ENCODE measurements at regions of chr7 and their contacts with region 1.

Region 1: DNA sequence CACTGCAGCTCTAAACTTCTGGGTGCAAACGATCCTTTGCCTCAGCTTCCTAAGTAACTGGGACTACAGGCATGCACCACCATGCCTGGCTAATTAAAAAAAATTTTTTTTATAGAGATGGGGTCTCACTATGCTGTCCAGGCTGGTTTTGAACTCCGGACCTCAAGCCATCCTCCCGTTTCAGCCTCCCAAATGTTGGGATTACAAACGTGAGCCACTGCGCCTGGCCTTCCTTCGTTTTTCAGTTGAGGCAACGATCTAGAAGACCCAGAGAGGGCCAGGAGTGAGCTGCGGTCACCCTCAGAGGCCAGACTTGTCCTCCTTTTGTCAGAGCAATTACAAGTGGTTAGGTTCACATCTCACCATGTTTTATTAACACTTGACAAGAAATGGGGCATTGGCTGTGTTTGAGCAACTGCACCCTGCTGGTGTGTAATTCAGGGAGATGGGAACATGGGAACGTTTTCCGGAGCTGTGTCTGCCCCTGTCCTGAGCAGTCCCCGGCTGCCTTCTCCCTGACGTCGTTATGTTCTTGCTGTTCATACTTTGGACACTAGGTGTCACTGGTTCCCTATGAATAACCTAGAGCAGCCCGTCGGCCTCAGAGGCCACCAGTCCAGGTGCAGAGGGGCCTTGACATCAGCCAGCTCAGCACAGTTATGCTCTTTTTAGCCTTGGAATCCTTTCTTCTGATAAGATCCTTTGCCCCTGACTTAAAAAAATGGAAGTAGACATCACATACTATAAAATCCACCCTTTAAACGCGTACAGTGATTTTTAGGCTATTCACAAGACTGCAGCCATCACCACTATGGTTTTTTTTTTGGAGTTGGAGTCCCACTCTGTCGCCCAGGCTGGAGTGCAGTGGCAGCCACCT is 375.0 kb downstream of the TYW1 start:
- DNase-seq: peak; percentile 67
- H3K4me3 ChIP-seq: no peak overlapping the region
- H3K27ac ChIP-seq: no peak overlapping the region
- H3K4me1 ChIP-seq: no peaks in the 10 kb centered on the region
- H3K27me3 ChIP-seq: no peaks in the 10 kb centered on the region
- CTCF ChIP-seq: peak; percentile 30 to 69 (median 68)
- POLR2A ChIP-seq: no peak

Region 2: DNA sequence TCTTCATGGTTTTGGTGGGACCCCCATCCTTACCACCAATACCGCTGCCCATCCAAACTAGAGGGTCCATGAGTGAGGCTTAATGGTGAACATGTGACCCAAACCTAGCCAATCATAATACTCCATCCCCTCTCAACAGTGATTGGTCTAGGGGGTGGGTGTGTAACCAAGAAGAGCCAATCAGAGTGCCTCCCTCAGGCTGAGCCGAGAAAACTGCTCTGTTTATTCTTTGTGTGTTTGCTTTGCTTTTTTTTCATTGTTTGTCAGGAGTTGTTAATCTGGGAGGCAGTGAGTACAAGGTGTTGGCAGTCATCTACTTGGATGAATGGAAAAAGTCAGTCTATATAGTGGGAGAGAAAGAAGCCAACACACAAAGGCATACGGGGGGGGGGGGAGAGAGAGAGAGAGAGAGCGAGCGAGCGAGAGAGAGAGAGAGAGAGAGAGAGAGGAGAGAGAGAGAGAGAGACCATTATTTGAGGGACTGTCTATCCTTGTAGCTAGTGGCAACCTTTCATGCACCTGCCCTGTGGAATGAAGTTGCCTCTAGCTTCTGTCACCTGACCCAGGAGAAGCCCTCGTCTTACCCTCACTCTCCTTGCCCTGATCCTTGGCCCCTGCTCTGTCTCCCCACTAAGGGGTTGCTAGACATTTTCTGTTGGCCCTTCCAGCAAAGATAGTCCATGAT is 66.7 kb after region 1 on chr7:
- intact Hi-C with region 1: no loop called
- DNase-seq: no peak
- H3K4me3 ChIP-seq: no peak overlapping the region
- H3K27ac ChIP-seq: no peak overlapping the region
- H3K4me1 ChIP-seq: peaks cover 7% of the 10 kb centered on the region
- H3K27me3 ChIP-seq: no peaks in the 10 kb centered on the region
- CTCF ChIP-seq: peak in 1 of 4 experiments; percentile 10
- POLR2A ChIP-seq: no peak

Region 3: GRCh38 chr7:67625257-67625737 is 253.6 kb after region 1 on chr7:
- intact Hi-C with region 1: loop called (anchors 10 kb)
- DNase-seq: peak; percentile 61
- H3K4me3 ChIP-seq: peak overlapping the region in 1 of 2 donors; percentile 12
- H3K27ac ChIP-seq: no peak overlapping the region
- H3K4me1 ChIP-seq: no peaks in the 10 kb centered on the region
- H3K27me3 ChIP-seq: no peaks in the 10 kb centered on the region
- CTCF ChIP-seq: peak; percentile 57 to 85 (median 75)
- POLR2A ChIP-seq: no peak

Region 4: DNA sequence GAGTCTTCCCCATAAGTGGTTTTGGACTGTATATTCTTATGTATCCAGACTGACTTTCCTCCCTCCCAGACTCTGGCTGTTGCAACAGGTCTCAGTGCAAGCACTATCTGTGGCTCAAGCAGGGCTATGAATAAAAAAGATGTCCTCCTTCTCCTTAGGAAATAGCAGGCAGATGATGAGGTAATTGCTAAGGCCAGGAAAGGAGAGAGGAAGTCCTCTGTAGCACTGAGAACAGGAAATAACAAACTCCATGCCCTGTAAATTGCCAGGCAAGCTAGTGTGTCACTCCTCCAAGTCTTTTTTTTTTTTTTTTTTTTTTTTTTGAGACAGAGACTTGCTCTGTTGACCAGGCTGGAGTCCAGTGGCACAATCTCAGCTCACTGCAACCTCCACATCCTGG is 525.1 kb after region 1 on chr7:
- intact Hi-C with region 1: no loop called
- DNase-seq: no peak
- H3K4me3 ChIP-seq: no peak overlapping the region
- H3K27ac ChIP-seq: no peak overlapping the region
- H3K4me1 ChIP-seq: no peaks in the 10 kb centered on the region
- H3K27me3 ChIP-seq: no peaks in the 10 kb centered on the region
- CTCF ChIP-seq: no peak
- POLR2A ChIP-seq: no peak

Measured in prostate gland (tissue), 2 donors.